ENCODE measurements at regions of chr17 and their contacts with region 1.

Region 1: DNA sequence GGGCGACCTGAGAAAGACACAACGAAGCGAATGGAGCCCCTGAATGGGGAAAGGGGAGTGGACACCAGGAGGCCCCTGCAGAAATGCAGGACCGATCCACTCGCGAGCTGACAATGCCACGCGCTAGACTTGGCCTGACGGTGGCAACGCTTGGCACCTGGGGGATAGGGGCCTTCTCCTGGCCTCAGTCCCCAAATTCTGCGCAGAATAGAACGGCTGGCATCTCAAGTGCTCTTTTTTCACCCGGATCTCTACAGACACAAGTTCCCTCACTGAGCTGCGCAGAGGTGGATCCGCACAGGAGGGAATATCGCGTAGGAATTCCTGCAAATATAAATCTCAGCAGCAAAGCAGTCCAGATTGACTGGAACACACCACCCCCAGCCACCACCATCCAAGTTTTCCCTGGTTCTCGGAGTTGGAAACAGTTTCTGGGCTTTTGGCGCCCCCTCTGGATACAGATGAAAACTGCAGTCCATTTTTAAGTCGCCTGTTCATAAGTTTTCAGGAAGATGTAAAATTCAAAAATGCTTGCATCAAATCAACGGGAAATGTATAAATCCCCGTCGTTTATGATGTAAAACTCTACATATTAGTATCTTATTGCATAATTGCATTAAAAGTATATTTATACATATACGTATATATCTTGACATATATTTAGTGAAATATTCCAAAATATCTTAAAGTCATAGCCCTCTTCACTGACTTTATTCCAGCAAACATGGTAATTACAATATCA is 2.3 kb upstream of the SOX9 start:
- DNase-seq: peak; percentile 78
- H3K4me3 ChIP-seq: peak overlapping the region in 3 of 4 donors; percentile 34 to 39 (median 35)
- H3K27ac ChIP-seq: no peak overlapping the region
- H3K4me1 ChIP-seq: peaks cover 0 to 62% (median 60%) of the 10 kb centered on the region in 4 donors
- H3K27me3 ChIP-seq: peaks cover 62 to 93% (median 74%) of the 10 kb centered on the region in 3 donors
- CTCF ChIP-seq: peak; percentile 63 to 93 (median 78)
- EP300 ChIP-seq: no peak
- POLR2A ChIP-seq: no peak

Region 2: DNA sequence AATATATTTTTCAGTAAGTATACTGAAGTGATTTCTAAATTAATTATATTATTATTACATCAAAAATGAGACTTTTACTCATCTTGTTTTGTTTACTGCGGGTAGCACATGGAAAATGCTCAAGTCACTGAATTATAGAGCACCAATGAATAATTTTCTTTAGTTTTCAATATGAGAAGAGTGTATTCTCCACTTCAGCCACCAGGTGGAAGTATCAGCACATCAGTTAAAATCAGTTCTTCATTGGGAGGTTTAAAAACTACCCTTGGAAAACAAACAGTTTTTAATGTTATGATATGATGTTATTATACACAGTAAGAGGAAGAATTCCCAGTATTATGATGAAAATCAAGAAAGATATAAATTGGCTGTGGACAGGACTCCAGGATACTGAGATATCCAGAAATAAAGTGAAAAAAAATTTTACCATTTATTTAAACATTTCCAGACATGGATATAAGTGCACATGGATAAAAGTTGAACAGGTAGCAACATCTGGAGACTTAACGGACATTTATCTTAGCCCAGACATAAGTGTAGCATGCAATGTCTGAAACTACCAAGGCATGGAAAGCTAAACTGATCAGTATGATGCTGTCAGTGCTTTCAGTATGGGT is 1481.9 kb before region 1 on chr17:
- intact Hi-C with region 1: loop called (anchors 1 kb)
- DNase-seq: no peak
- H3K4me3 ChIP-seq: no peak overlapping the region
- H3K27ac ChIP-seq: no peak overlapping the region
- H3K4me1 ChIP-seq: no peaks in the 10 kb centered on the region
- H3K27me3 ChIP-seq: no peaks in the 10 kb centered on the region
- CTCF ChIP-seq: peak; percentile 65 to 85 (median 78)
- EP300 ChIP-seq: no peak
- POLR2A ChIP-seq: no peak

Region 3: DNA sequence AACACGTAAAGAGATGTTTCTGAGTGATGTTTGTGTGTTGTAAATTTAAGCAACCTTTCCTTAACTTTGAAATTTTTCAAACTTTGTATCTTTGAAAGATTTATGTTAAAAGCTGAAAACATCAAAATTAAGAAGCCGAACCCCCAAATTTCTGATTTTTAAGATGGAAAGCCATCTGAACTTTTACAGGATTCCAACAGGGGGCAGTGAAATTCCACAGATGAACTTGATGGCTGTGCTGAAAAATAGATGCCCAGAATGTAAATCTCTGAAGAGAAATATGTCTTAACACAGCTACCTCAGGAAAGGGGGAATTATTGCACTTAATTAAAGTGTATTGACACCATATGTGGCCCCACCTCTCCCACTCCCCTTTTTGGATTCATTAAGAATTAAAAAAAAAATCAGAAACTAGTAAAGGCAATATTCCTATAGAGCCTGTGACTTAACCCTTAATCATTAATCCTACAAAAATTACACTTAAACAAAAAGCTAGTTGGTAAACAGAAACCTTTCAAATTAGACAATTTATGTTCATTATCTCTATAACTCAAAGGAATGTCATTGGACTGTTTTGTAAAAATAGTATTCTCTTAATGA is 1351.3 kb before region 1 on chr17:
- intact Hi-C with region 1: loop called (anchors 5 kb)
- DNase-seq: no peak
- H3K4me3 ChIP-seq: no peak overlapping the region
- H3K27ac ChIP-seq: no peak overlapping the region
- H3K4me1 ChIP-seq: peaks cover 0 to 3% (median 0%) of the 10 kb centered on the region in 4 donors
- H3K27me3 ChIP-seq: no peaks in the 10 kb centered on the region
- CTCF ChIP-seq: peak; percentile 34 to 57 (median 48)
- EP300 ChIP-seq: no peak
- POLR2A ChIP-seq: no peak

Region 4: DNA sequence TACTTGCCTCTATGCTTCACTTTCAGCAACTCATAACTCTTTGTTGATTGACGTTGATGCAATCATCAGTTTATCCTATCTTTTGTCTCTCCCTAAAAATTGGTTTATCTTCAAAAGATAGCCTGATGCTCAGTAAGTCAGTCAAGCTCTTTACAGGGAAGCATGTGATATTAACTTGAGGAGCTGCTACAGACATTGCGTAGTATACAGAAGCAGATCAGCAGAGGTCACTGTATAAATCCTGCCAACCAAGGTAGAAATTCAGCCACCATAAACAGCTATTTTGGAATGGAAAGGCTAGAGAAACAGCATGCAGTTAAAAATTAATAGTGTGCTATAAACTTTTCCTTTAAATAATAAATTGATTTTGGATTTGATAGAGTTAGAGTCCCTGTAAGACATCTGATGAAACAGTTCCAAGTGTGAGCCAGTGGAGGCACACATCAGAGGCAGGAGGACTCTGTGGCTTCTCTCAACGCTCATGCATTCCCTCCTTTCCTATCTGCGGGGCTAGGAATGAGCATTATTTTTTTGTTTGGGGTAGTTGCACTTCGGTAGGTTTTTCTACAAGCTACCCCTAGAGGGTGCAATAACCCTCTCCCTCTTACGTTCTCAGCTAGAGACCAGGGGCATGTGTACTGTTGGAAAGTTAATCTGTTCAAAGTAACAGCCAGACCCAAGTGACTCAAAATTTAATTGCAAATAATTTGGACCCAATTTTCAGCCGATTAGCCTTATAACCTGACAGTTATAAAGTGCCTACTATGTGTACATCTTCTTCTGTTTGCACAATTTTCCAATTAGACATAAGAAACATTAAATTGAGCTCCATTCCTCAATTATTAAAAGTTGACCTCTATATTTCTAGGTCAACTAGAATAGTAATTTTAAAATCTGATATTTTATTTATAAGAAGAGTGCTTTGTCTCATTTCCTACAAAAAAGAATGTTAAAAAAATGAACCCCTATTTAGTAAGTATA is 645.4 kb before region 1 on chr17:
- intact Hi-C with region 1: loop called (anchors 2 kb)
- DNase-seq: no peak
- H3K4me3 ChIP-seq: no peak overlapping the region
- H3K27ac ChIP-seq: no peak overlapping the region
- H3K4me1 ChIP-seq: no peaks in the 10 kb centered on the region
- H3K27me3 ChIP-seq: no peaks in the 10 kb centered on the region
- CTCF ChIP-seq: peak in 3 of 4 experiments; percentile 45 to 52 (median 49)
- EP300 ChIP-seq: no peak
- POLR2A ChIP-seq: no peak

Region 5: DNA sequence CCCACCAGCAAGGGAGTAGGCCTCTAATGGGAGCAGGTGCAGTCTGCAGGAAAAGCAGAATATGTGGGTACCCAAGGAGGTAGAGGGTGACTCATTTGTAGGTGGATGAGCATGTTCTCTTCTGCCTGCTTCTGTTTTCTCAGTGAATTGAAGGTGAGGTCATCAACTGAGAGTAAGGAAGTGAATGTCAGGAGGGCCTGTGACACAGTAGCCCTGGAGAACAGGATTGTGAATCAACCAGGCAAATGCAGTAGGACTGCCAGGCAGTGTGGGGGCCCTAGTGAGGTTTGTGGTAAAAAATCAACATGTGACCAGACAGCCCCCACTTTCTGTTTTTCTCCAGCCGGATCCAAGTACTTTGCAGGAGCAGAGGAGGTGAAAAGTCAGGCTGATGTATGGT is 148.2 kb before region 1 on chr17:
- intact Hi-C with region 1: loop called (anchors 5 kb)
- DNase-seq: no peak
- H3K4me3 ChIP-seq: no peak overlapping the region
- H3K27ac ChIP-seq: no peak overlapping the region
- H3K4me1 ChIP-seq: peaks cover 0 to 9% (median 4%) of the 10 kb centered on the region in 4 donors
- H3K27me3 ChIP-seq: no peaks in the 10 kb centered on the region
- CTCF ChIP-seq: no peak
- EP300 ChIP-seq: no peak
- POLR2A ChIP-seq: no peak

Region 6: GRCh38 chr17:72539981-72540897 is 421.7 kb after region 1 on chr17:
- intact Hi-C with region 1: loop called (anchors 10 kb)
- DNase-seq: peak; percentile 77
- H3K4me3 ChIP-seq: peak overlapping the region in 2 of 4 donors; percentile 23 to 31
- H3K27ac ChIP-seq: no peak overlapping the region
- H3K4me1 ChIP-seq: peaks cover 0 to 10% (median 2%) of the 10 kb centered on the region in 4 donors
- H3K27me3 ChIP-seq: peaks cover 0 to 5% (median 0%) of the 10 kb centered on the region in 3 donors
- CTCF ChIP-seq: peak; percentile 69 to 89 (median 74)
- EP300 ChIP-seq: no peak
- POLR2A ChIP-seq: no peak

Measured in sigmoid colon (tissue), 7 donors.